PC-9 (cell line): ENCODE measurements at regions of chr9 and their contacts with region 1.

Region 1: GRCh38 chr9:21933865-21934264 is 60.3 kb downstream of the CDKN2A start:
- DNase-seq: no peak
- H3K4me3 ChIP-seq: no peak overlapping the region
- H3K27ac ChIP-seq: no peak overlapping the region
- H3K4me1 ChIP-seq: 0 out of 2 replicates have a peak, but pooled peaks cover 12% of the 10 kb centered on the region
- H3K27me3 ChIP-seq: no peaks in the 10 kb centered on the region
- CTCF ChIP-seq: no peak

Region 2: GRCh38 chr9:21974548-21975409 is 40.9 kb after region 1 on chr9:
- CTCF ChIA-PET with region 1: no interaction called
- POLR2A ChIA-PET with region 1: interaction called, 11 read pairs
- intact Hi-C with region 1: no loop called
- DNase-seq: peak; percentile 72 to 82
- H3K4me3 ChIP-seq: peak overlapping the region; percentile 65
- H3K27ac ChIP-seq: peak overlapping the region; percentile 75
- H3K4me1 ChIP-seq: peaks cover 31% of the 10 kb centered on the region
- H3K27me3 ChIP-seq: no peaks in the 10 kb centered on the region
- CTCF ChIP-seq: no peak